Aorta (tissue), 5 donors: ENCODE measurements at regions of chr7 and their contacts with region 1.

Region 1: DNA sequence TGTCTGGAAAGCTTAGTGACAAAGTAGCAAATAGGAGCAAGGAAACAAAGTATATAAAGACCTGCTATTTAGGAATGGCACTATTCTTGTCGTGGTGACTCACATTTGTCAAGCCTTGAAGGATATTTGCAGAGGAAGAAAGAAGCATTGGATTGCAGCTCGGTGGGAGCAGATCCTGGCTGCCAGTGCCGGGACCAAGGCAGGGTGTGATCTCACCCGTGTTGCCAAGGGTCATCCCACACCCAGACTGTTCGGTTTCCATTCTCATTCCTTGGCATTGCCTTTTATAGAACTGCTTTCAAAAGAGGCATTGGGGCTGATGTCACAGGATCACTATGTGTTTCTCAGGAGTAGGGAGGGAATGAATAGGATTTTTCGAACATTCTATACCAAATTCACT is 176.2 kb downstream of the GALNT17 start:
- DNase-seq: peak; percentile 85 to 88
- ATAC-seq: peak; percentile 90
- H3K4me3 ChIP-seq: no peak overlapping the region
- H3K27ac ChIP-seq: peak overlapping the region; percentile 93 to 97
- H3K4me1 ChIP-seq: peaks cover 2 to 14% of the 10 kb centered on the region in 2 donors
- H3K27me3 ChIP-seq: no peaks in the 10 kb centered on the region

Region 2: DNA sequence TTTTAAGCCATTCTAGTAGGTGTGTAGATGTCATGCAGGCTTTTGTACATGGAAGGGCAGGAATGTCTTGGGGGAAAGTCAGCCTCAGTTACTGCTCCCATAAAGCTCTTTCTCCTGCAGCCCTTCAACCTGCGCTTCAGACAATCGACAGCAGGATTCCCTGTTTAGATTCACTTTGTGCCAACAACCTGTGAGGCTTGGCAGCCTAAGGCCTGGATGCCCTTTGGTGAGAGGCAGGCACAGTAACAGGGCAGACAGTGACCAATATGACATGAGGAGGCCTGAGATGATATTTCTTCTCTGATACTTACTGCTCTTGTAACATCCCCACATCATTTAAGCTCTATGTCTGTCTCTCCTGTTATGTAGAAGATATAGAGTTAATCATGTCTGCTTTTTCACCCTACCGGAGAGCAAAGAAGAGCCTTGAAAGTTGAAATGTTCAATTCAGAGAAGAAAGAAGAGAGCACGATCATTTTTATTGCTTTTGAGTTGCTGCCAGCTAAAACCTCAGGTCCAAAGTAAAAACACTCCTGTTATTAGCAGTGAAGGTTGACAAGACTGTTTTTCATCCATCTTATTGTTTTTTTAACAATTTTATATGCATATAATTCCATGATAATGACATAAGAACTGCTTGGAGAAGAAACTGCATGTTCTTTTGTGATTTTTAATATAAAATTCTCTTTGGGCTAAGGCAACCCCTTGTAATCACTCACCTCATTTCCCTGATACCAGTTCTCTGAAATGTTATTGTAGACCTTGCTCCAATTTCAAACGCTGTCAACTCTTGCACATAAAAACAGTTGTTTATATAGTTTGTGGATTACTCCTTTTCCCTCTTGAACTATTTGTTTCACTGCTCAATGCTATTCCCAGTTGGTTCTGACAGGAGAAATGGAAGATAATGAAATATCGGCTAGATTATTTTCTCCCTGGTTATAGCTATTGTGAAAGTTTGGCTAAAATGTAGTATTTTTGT is 35.3 kb before region 1 on chr7:
- intact Hi-C with region 1: loop called (anchors 5 kb)
- DNase-seq: no peak
- ATAC-seq: no peak
- H3K4me3 ChIP-seq: no peak overlapping the region
- H3K27ac ChIP-seq: peak overlapping the region; percentile 22 to 85
- H3K4me1 ChIP-seq: no peaks in the 10 kb centered on the region
- H3K27me3 ChIP-seq: no peaks in the 10 kb centered on the region

Region 3: GRCh38 chr7:71457846-71458590 is 149.9 kb after region 1 on chr7:
- intact Hi-C with region 1: no loop called
- DNase-seq: no peak
- ATAC-seq: no peak
- H3K4me3 ChIP-seq: no peak overlapping the region
- H3K27ac ChIP-seq: no peak overlapping the region
- H3K4me1 ChIP-seq: no peaks in the 10 kb centered on the region
- H3K27me3 ChIP-seq: no peaks in the 10 kb centered on the region